ENCODE measurements at regions of chr19 and their contacts with region 1.

Region 1: GRCh38 chr19:12139885-12140547 is at the start of gene ZNF20:
- DNase-seq: peak; percentile 97
- ATAC-seq: peak; percentile 99
- total RNA-seq, gene ZNF20: 1.1 TPM

Region 2: GRCh38 chr19:11798391-11799330 is 341.4 kb before region 1 on chr19 and contains the start of gene ZNF491:
- intact Hi-C with region 1: loop called (anchors 1 kb)
- DNase-seq: peak; percentile 94
- ATAC-seq: peak; percentile 99
- total RNA-seq, gene ZNF491: 2.8 TPM

Region 3: GRCh38 chr19:11881151-11881800 is 258.7 kb before region 1 on chr19:
- intact Hi-C with region 1: loop called (anchors 2 kb)
- DNase-seq: no peak
- ATAC-seq: peak; percentile 67

Region 4: DNA sequence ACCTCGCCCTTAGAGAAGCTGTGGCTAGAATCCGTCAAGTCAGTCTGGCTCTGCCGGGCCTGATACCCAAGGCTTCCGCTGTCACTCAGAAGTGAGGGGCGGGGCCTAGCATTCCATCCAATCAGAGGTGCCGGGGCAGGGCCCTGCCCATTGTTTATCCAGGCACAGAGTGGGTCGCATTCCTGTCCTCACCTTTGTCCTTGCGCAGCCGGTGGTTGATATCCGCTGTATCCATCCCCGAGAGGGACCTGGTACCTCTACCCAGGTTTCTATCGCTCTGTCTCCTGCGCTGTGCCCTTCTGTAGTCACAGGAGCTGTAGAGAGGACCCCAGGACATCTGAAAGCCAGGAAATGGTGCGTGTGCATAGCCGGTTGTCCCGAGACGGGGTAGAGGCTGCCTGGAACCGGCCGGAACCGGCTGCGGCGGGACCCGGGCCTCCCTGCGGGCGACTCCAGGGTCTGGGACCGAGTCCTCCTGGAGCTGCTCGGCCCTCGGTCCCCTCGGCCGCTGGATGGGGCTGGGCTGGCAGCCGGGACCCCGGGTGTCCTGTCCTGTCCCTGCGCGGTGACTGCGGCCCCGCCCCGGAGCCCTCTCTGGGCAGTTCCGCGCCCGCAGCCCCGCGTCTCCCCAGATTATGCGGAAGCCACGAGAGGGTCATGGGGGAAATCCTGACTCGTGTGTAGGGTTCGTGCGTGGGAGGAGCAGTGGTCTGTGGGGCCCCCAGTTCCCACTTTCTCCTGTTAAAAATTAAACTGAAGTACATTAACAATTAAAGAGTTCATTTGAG is 175.0 kb before region 1 on chr19 and contains the start of gene ZNF763:
- intact Hi-C with region 1: loop called (anchors 1 kb)
- DNase-seq: peak; percentile 96
- ATAC-seq: peak; percentile 99
- total RNA-seq, gene ZNF763: 2.6 TPM

Region 5: GRCh38 chr19:12090807-12091206 is 49.2 kb before region 1 on chr19:
- intact Hi-C with region 1: loop called (anchors 2 kb)
- DNase-seq: peak; percentile 50
- ATAC-seq: no peak

Region 6: DNA sequence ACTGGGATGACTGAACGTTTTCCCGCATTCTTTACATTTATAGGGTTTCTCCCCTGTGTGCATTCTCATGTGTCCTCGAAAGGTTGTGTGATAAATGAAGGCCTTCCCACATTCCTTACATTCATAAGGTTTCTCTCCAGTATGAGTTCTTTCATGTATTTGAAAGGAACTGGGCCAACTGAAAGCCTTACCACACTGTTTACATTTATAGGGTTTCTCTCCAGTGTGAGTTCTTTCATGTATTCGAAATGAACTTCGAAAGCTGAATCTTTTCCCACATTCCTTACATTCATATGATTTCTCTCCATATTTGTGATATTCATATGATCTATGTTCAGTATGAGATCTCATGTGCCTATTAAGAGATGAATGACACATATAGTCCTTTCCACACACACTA is 325.2 kb after region 1 on chr19:
- intact Hi-C with region 1: no loop called
- DNase-seq: no peak
- ATAC-seq: no peak